ENCODE measurements at regions of chr16 and their contacts with region 1.

Region 1: DNA sequence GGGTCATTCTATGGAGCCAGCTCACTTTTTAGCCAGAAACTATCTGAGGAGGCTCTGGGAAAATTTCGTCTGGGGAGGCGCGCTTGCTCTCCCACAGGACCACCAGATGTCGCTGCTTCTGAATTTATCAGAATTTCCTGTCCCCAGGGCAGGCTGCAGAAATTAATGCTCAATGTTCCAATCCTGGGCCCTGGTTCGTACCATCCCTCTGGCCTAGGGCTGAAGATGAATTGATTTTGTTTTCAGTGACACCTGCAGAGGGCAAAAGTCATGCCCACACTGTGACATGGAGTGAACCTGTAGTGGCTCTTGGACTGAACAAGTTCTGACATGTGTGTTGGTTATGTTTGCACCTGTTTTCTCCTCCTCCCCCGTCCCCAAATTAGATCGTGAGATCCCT is 482.6 kb downstream of the NPIPA7 start:
- DNase-seq: peak; percentile 49
- H3K4me3 ChIP-seq: no peak overlapping the region
- H3K27ac ChIP-seq: no peak overlapping the region
- H3K4me1 ChIP-seq: no peaks in the 10 kb centered on the region
- H3K27me3 ChIP-seq: peaks cover 3% of the 10 kb centered on the region
- CTCF ChIP-seq: peak; percentile 52 to 68 (median 63)
- POLR2A ChIP-seq: no peak

Region 2: GRCh38 chr16:16788004-16788403 is 73.5 kb before region 1 on chr16:
- intact Hi-C with region 1: no loop called
- DNase-seq: no peak
- H3K4me3 ChIP-seq: no peak overlapping the region
- H3K27ac ChIP-seq: no peak overlapping the region
- H3K4me1 ChIP-seq: no peaks in the 10 kb centered on the region
- H3K27me3 ChIP-seq: no peaks in the 10 kb centered on the region
- CTCF ChIP-seq: no peak
- POLR2A ChIP-seq: no peak

Region 3: GRCh38 chr16:17343028-17343427 is 481.5 kb after region 1 on chr16:
- intact Hi-C with region 1: no loop called
- DNase-seq: no peak
- H3K4me3 ChIP-seq: no peak overlapping the region
- H3K27ac ChIP-seq: peak overlapping the region in 1 of 2 donors; percentile 1
- H3K4me1 ChIP-seq: peaks cover 17% of the 10 kb centered on the region
- H3K27me3 ChIP-seq: no peaks in the 10 kb centered on the region
- CTCF ChIP-seq: no peak
- POLR2A ChIP-seq: no peak

Region 4: DNA sequence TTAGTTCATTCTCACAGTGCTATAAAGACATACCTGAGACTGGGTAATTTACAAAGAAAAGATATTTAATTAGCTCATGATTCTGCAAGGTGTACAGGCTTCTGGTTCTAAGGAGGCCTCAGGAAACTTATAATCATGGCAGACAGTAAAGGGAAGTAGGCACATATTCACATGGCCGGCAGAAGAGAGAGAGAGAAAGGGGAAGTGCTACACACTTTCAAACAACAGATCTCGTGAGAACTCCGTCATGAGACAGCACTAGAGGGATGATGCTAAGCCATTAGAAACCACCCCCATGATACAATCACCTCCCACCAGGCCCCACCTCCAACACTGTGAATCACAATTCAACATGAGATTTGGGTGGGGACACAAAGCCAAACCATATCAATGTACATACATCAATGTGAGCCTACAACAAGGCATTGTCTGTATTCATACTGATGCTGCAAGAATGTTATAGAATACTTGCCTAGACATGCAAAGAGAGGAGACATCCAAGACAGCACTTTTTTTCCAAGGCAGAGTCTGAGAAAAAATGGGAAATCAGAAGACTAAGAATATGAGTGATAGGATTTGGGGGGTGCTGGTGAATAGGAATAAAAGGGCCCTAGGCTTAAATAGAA is 724.0 kb after region 1 on chr16:
- intact Hi-C with region 1: loop called (anchors 10 kb)
- DNase-seq: no peak
- H3K4me3 ChIP-seq: no peak overlapping the region
- H3K27ac ChIP-seq: no peak overlapping the region
- H3K4me1 ChIP-seq: no peaks in the 10 kb centered on the region
- H3K27me3 ChIP-seq: no peaks in the 10 kb centered on the region
- CTCF ChIP-seq: no peak
- POLR2A ChIP-seq: no peak